ENCODE measurements at regions of chr1 and their contacts with region 1.

Region 1: DNA sequence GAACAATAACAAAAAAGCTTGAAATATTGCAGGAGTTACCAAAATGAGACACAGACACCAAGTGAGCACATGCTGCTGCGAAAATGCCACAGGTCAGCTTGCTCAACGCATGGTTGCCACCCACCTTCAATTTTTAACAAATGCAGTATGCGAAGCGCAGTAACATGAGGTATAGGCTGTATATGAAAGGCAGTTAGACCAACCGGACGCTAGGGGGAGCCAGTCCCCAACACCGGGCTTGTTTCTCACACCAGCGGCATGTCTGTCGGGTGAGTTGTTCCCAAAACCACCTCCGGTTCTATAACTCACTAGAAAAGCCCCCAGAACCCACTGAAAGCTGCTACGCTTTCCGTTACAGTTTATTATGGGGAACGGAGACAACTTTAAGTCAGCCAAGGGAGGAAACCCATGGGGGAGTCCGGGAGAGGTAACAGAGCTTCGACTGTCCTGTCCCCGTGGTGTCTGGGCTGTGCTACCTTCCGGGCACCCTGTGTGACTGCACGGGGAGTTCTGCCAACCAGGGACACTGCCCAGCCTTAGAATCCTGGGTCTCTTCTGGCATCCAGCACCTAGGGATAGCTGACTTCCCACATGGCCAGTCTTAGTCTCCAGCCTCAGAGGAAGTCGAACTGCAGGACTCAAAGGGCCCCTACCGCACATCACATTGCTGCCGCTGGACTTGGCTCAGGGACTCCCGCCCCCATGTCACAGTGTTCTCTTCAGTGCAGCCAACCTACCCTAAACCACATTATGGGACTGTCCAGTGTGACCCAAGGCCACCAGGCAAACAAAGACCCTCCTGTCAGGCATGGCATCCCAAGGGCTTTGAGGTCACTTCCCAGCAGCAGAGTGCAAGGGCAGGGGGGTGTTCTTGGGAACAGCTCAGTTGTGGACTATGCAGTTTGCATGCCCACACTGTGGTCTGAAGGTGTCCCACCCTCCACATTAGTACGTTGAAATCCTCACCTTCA is 14.0 kb downstream of the RNF187 start:
- DNase-seq: peak; percentile 97
- H3K4me3 Mint-ChIP-seq: peak overlapping the region; percentile 20
- H3K27ac Mint-ChIP-seq: no peak overlapping the region
- H3K4me1 Mint-ChIP-seq: peaks cover 10% of the 10 kb centered on the region
- H3K27me3 Mint-ChIP-seq: no peaks in the 10 kb centered on the region
- CTCF ChIP-seq: peak; percentile 99

Region 2: DNA sequence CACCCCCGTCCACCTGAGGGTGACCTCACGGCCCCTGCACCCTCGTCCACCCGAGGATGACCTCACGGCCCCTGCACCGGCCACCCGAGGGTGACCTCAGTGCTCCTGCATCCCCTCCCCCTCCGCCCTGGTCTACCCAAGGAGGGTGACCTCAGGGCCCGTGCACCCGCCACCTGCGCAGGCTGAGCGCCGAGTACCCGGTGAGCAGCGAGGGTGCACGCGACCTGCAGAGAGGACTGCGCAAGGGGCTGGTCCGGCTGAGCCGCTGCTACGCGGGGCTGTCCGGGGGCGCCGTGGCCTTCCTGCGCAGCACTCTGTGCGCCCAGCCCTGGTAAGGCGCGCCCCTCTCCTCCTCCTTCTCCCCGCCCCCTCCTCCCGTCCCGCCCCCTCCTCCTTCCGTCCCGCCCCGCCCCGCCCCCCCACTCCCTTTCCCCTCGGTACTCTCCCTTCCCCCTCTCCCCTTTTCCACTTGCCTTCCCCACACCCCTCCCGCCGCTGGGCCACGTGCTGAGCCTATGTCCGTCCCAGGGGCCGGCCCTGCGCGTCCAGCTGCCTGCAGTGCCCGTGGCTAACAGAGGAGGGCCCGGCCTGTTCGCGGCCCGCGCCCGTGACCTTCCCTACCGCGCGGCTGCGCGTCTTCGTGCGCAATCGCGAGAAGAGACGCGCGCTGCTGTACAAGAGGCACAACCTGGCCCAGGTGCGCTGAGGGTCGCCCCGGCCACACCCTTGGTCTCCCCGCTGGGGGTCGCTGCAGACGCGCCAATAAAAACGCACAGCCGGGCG is 122.9 kb before region 1 on chr1:
- CTCF ChIA-PET with region 1: no interaction called
- POLR2A ChIA-PET with region 1: no interaction called
- intact Hi-C with region 1: loop called (anchors 5 kb)
- DNase-seq: peak; percentile 88
- H3K4me3 Mint-ChIP-seq: peak overlapping the region; percentile 95
- H3K27ac Mint-ChIP-seq: peak overlapping the region; percentile 84
- H3K4me1 Mint-ChIP-seq: peaks cover 21% of the 10 kb centered on the region
- H3K27me3 Mint-ChIP-seq: no peaks in the 10 kb centered on the region
- CTCF ChIP-seq: peak; percentile 91

Region 3: DNA sequence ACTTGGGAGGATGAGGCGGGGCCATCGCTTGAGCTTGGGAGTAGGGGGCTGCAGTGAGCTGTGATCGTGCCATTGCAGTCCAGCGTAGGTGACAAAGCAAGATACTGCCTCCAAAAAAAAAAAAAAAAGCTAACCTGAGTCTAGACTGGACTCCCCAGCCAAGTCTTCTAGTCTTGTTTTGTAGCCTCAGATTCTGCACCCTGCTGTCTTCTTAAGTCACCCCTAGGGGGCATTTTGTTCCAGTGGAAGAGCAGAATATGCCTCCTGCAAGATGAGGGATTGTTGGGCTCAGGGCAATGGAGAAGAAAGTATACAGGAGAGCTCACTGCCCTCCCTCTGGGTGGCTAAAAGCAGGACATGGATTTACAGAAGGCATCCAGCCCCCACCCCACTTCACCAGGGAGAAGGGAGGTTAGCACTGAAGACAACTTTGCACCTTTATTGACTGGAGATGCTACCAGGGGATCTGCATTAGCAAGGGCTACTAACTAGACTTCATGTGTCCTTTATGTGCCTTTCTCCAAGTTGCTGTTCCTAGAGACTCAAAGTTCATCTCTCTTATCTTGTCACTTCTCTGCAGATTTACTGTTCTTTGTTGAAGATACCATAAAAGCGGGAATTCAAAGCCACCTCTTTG is 29.3 kb before region 1 on chr1:
- CTCF ChIA-PET with region 1: interaction called, 10 read pairs
- POLR2A ChIA-PET with region 1: no interaction called
- intact Hi-C with region 1: no loop called
- DNase-seq: peak; percentile 81
- H3K4me3 Mint-ChIP-seq: no peak overlapping the region
- H3K27ac Mint-ChIP-seq: no peak overlapping the region
- H3K4me1 Mint-ChIP-seq: peaks cover 6% of the 10 kb centered on the region
- H3K27me3 Mint-ChIP-seq: peaks cover 23% of the 10 kb centered on the region
- CTCF ChIP-seq: peak; percentile 70

Region 4: DNA sequence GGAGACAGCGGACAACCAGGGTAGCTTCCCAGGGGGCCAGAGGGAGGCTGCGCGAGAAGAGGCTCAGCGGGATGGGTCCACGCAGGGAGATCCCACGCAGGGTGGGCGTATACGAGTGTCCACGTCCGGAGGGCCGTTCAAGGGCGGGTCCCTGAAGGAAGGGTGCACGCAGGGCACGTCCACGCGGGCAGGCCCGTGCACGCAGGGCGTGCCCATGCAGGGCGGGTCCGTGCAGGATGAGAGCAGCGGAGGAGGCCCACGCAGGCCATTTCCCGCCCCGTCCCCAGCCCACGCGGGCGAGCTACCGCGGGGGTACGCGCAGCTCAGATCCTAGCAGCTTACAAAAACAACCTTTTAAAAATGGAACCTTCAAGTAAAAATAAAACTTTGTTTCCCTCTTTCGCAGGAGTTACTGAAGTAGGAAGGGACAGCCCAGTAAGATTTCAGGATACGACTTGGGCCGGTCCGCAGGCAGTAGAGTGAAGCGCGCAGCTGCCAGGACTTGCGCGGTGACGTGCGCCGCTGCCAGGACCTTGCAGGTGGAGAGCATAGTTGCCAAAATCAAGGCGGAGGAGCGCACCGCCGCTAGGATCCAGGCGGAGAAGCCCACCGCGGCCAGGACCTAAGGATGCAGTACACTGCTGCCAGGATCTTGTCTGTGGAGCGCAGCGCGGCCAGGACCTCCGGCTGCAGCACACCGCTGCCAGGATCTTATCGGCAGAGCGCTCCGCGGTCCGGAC is 14.4 kb before region 1 on chr1:
- CTCF ChIA-PET with region 1: interaction called, 31 read pairs
- POLR2A ChIA-PET with region 1: interaction called, 52 read pairs
- intact Hi-C with region 1: no loop called
- DNase-seq: peak; percentile 93
- H3K4me3 Mint-ChIP-seq: peak overlapping the region; percentile 90
- H3K27ac Mint-ChIP-seq: peak overlapping the region; percentile 100
- H3K4me1 Mint-ChIP-seq: peaks cover 40% of the 10 kb centered on the region
- H3K27me3 Mint-ChIP-seq: peaks cover 14% of the 10 kb centered on the region
- CTCF ChIP-seq: no peak

Measured in MCF 10A (cell line).